ENCODE measurements at regions of chr2 and their contacts with region 1.

Region 1: DNA sequence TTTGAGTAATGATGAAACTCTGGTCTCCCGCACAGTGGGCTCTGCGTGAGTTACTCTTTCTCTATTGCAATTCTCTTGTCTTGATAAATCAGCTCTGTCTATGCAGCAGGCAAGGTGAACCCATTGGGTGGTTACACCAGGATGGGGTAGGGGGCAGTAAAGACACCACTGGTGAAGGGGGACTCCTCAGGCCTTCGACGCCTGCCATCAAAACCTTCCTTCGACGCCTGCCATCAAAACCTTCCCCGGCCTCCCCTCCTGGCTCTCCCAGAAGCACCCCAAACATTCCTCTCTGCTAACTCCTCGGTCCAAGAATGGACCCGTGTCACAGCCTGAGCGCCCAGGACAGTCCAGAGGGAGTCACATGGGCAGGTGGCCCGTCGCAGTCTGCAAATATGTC is 4.8 kb upstream of the STARD7 start:
- DNase-seq: no peak
- ATAC-seq: no peak
- H3K4me3 Mint-ChIP-seq: no peak overlapping the region
- H3K27ac Mint-ChIP-seq: no peak overlapping the region
- H3K4me1 Mint-ChIP-seq: peaks cover 9% of the 10 kb centered on the region
- H3K27me3 Mint-ChIP-seq: no peaks in the 10 kb centered on the region

Region 2: DNA sequence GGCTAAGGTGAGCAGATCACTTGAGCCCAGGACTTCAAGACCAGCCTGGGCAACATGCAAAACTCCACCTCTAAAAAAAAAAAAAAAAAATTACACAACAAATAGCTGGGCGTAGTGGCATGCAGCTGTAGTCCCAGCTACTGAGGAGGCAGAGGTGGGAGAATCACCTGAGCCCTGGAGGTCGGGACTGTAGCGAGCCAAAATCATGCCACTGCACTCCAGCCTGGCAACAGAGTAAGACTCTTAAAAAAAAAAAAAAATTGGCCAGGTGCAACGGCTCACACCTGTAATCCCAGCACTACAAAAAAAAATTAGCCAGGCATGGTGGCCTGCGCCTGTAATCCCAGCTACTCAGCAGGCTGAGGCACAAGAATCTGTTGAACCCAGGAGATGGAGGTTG is 12.0 kb before region 1 on chr2:
- CTCF ChIA-PET with region 1: interaction called, 4 read pairs
- POLR2A ChIA-PET with region 1: no interaction called
- intact Hi-C with region 1: loop called in 1 of 2 experiments (anchors 1 kb)
- DNase-seq: no peak
- ATAC-seq: no peak
- H3K4me3 Mint-ChIP-seq: no peak overlapping the region
- H3K27ac Mint-ChIP-seq: no peak overlapping the region
- H3K4me1 Mint-ChIP-seq: peaks cover 76% of the 10 kb centered on the region
- H3K27me3 Mint-ChIP-seq: no peaks in the 10 kb centered on the region

Region 3: DNA sequence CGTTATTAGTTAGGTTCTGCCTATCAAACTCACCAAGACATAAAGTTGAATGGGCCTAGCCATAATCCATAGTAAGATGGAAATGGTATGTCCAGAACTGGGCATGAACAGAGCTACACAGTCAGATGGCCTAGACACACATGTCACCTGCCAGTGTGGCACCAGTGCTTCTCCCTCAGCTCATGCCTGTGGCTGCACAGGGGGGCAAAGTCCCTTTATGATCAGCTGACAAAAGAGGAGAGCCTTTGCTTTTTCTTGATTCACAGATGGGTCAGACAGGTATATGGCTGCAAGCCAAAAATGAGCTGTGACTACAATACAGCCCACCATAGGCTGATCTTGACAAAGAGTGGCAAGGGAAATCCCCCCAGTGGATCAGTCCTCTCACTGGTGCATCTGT is 23.5 kb after region 1 on chr2:
- CTCF ChIA-PET with region 1: interaction called, 5 read pairs
- POLR2A ChIA-PET with region 1: no interaction called
- intact Hi-C with region 1: loop called in 1 of 2 experiments (anchors 1 kb)
- DNase-seq: no peak
- ATAC-seq: no peak
- H3K4me3 Mint-ChIP-seq: no peak overlapping the region
- H3K27ac Mint-ChIP-seq: no peak overlapping the region
- H3K4me1 Mint-ChIP-seq: peaks cover 10% of the 10 kb centered on the region
- H3K27me3 Mint-ChIP-seq: no peaks in the 10 kb centered on the region

Region 4: GRCh38 chr2:96344011-96344410 is 130.6 kb after region 1 on chr2:
- CTCF ChIA-PET with region 1: no interaction called
- POLR2A ChIA-PET with region 1: no interaction called
- intact Hi-C with region 1: no loop called
- DNase-seq: peak; percentile 56
- ATAC-seq: peak; percentile 74
- H3K4me3 Mint-ChIP-seq: no peak overlapping the region
- H3K27ac Mint-ChIP-seq: peak overlapping the region; percentile 55
- H3K4me1 Mint-ChIP-seq: peaks cover 46% of the 10 kb centered on the region
- H3K27me3 Mint-ChIP-seq: no peaks in the 10 kb centered on the region

Region 5: DNA sequence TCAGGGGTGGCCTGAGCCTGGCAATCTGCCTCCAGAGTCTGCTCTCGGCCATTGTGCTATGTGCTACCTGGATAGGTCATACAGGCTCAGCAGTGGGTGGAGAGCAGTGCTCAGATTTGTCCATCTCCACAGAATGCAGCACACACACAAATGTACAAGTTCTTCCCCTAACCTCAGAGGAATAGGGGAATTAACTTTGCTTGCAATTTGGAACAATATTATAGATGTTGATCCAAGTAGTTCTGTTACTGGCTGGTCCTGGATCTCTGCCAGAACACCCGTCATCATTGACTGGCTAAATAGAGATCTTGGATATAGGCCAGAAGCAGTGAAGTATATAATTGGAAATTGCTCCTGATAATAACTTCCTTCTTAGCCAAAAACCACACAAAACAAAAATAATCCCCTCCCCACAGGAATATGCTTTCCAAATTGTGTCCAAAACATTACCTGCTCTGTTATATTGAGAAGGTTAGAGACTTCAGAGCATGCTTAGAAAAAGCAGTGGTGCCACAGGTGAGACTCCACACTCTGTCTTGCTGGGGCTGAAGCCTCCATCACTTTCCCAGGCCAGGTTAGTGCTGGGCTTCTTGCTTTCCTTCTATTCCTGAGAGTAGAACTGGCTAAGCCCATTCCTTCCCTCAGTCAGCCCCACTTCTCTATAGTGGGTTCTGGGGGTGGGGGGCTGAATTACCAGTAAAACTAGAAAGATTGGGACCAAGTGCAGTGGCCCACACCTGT is 161.0 kb after region 1 on chr2:
- CTCF ChIA-PET with region 1: no interaction called
- POLR2A ChIA-PET with region 1: no interaction called
- intact Hi-C with region 1: no loop called
- DNase-seq: no peak
- ATAC-seq: no peak
- H3K4me3 Mint-ChIP-seq: no peak overlapping the region
- H3K27ac Mint-ChIP-seq: no peak overlapping the region
- H3K4me1 Mint-ChIP-seq: no peaks in the 10 kb centered on the region
- H3K27me3 Mint-ChIP-seq: no peaks in the 10 kb centered on the region

Region 6: DNA sequence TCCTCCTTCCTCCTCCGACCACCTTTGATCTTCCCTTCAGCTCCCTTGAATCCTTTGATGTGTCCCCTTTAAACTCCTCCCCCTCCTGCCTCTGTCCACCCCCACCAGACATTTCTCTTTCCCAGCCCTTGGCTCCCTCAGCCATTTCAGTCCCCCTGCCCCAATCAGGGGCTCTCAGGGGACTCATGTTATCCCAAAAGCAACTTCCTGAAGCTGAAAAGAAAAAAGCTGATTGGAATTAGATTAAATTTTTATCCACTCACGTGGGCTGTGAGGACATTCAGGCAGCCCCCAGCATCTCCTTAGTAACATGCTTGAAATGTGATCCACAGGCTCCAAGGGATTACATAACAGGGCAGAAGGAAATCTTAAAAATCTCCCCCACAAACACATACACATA is 210.4 kb after region 1 on chr2:
- CTCF ChIA-PET with region 1: no interaction called
- POLR2A ChIA-PET with region 1: no interaction called
- intact Hi-C with region 1: no loop called
- DNase-seq: no peak
- ATAC-seq: no peak
- H3K4me3 Mint-ChIP-seq: no peak overlapping the region
- H3K27ac Mint-ChIP-seq: no peak overlapping the region
- H3K4me1 Mint-ChIP-seq: peaks cover 10% of the 10 kb centered on the region
- H3K27me3 Mint-ChIP-seq: peaks cover 9% of the 10 kb centered on the region

Region 7: GRCh38 chr2:96842600-96842999 is 629.2 kb after region 1 on chr2:
- CTCF ChIA-PET with region 1: no interaction called
- POLR2A ChIA-PET with region 1: no interaction called
- intact Hi-C with region 1: no loop called
- DNase-seq: no peak
- ATAC-seq: no peak
- H3K4me3 Mint-ChIP-seq: no peak overlapping the region
- H3K27ac Mint-ChIP-seq: no peak overlapping the region
- H3K4me1 Mint-ChIP-seq: peaks cover 11% of the 10 kb centered on the region
- H3K27me3 Mint-ChIP-seq: no peaks in the 10 kb centered on the region